ENCODE measurements at regions of chr3 and their contacts with region 1.

Region 1: DNA sequence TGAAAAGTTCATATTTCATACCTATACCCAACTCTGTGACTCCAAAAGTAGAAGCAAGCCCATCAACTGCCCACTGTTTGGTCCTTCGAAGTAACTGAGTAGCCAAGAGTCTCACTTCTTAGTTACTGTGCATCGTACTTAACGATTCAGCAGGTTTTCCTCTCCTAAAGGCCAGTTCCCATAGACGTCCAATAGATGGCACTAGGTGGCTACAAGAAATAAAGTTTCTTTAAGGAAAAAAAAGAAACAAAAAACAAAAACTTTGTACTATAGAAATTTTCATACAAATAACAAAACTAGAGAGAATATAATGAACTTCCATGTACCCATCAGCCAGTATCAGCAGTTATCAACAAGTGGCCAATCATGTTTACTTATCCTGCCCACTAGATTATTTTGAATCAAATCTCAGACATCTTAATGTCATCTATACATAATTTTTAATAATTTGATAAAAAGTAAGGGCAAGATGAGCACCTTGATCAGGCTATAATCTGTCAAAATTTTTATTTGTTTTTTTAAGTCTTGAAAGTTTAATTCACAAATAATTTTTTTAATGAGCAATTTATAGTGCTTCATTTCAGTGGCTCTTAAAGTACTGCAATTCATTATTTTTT is 63.8 kb upstream of the ACP3 start:
- DNase-seq: peak in 1 of 2 experiments; percentile 48
- H3K4me3 ChIP-seq: no peak overlapping the region
- H3K4me3 Mint-ChIP-seq: no peak overlapping the region
- H3K27ac Mint-ChIP-seq: no peak overlapping the region
- H3K4me1 ChIP-seq: no peaks in the 10 kb centered on the region
- H3K4me1 Mint-ChIP-seq: no peaks in the 10 kb centered on the region
- H3K27me3 ChIP-seq: no peaks in the 10 kb centered on the region
- H3K27me3 Mint-ChIP-seq: peaks cover 3% of the 10 kb centered on the region
- CTCF ChIP-seq: peak; percentile 56 to 84

Region 2: GRCh38 chr3:132225664-132226063 is 27.7 kb before region 1 on chr3:
- CTCF ChIA-PET with region 1: no interaction called
- POLR2A ChIA-PET with region 1: no interaction called
- intact Hi-C with region 1: loop called (anchors 2 kb)
- DNase-seq: no peak
- H3K4me3 ChIP-seq: no peak overlapping the region
- H3K4me3 Mint-ChIP-seq: no peak overlapping the region
- H3K27ac Mint-ChIP-seq: no peak overlapping the region
- H3K4me1 ChIP-seq: no peaks in the 10 kb centered on the region
- H3K4me1 Mint-ChIP-seq: no peaks in the 10 kb centered on the region
- H3K27me3 ChIP-seq: no peaks in the 10 kb centered on the region
- H3K27me3 Mint-ChIP-seq: peaks cover 10% of the 10 kb centered on the region
- CTCF ChIP-seq: no peak

Region 3: GRCh38 chr3:132293251-132293650 is 39.9 kb after region 1 on chr3:
- CTCF ChIA-PET with region 1: no interaction called
- POLR2A ChIA-PET with region 1: no interaction called
- intact Hi-C with region 1: no loop called
- DNase-seq: no peak
- H3K4me3 ChIP-seq: no peak overlapping the region
- H3K4me3 Mint-ChIP-seq: no peak overlapping the region
- H3K27ac Mint-ChIP-seq: no peak overlapping the region
- H3K4me1 ChIP-seq: no peaks in the 10 kb centered on the region
- H3K4me1 Mint-ChIP-seq: peaks cover 15% of the 10 kb centered on the region
- H3K27me3 ChIP-seq: no peaks in the 10 kb centered on the region
- H3K27me3 Mint-ChIP-seq: no peaks in the 10 kb centered on the region
- CTCF ChIP-seq: no peak

Region 4: GRCh38 chr3:132343018-132343612 is 89.7 kb after region 1 on chr3:
- CTCF ChIA-PET with region 1: interaction called, 62 read pairs
- POLR2A ChIA-PET with region 1: no interaction called
- intact Hi-C with region 1: loop called (anchors 1 kb)
- DNase-seq: peak; percentile 33 to 56
- H3K4me3 ChIP-seq: no peak overlapping the region
- H3K4me3 Mint-ChIP-seq: no peak overlapping the region
- H3K27ac Mint-ChIP-seq: no peak overlapping the region
- H3K4me1 ChIP-seq: no peaks in the 10 kb centered on the region
- H3K4me1 Mint-ChIP-seq: peaks cover 6% of the 10 kb centered on the region
- H3K27me3 ChIP-seq: no peaks in the 10 kb centered on the region
- H3K27me3 Mint-ChIP-seq: no peaks in the 10 kb centered on the region
- CTCF ChIP-seq: peak; percentile 81 to 88

Region 5: GRCh38 chr3:132399054-132399929 is 145.9 kb after region 1 on chr3:
- CTCF ChIA-PET with region 1: interaction called, 17 read pairs
- POLR2A ChIA-PET with region 1: no interaction called
- intact Hi-C with region 1: loop called (anchors 1 kb)
- DNase-seq: peak in 1 of 2 experiments; percentile 49
- H3K4me3 ChIP-seq: no peak overlapping the region
- H3K4me3 Mint-ChIP-seq: no peak overlapping the region
- H3K27ac Mint-ChIP-seq: no peak overlapping the region
- H3K4me1 ChIP-seq: no peaks in the 10 kb centered on the region
- H3K4me1 Mint-ChIP-seq: no peaks in the 10 kb centered on the region
- H3K27me3 ChIP-seq: no peaks in the 10 kb centered on the region
- H3K27me3 Mint-ChIP-seq: no peaks in the 10 kb centered on the region
- CTCF ChIP-seq: peak; percentile 78 to 83

Measured in Caco-2 (cell line).